PC-9 (cell line): ENCODE measurements at regions of chr2 and their contacts with region 1.

Region 1: DNA sequence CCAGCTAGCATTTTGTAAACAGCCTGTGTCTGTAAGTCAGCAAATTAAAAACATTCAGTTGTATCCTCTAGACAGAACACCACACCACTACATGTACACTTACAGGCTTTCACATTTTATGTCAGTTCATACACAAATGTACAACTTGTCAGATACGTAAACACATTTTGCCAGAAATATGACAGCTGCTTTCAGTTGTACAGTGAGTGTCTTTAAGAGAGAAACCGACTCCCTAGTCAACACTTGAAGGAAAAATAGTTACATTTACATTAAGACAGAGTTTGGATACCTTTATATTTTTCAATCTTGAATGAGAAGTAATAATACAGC is 15.2 kb downstream of the MRPL35 start:
- DNase-seq: no peak
- H3K4me3 ChIP-seq: no peak overlapping the region
- H3K27ac ChIP-seq: no peak overlapping the region
- H3K4me1 ChIP-seq: no peaks in the 10 kb centered on the region
- H3K27me3 ChIP-seq: no peaks in the 10 kb centered on the region
- CTCF ChIP-seq: no peak

Region 2: GRCh38 chr2:86383844-86384243 is 169.4 kb after region 1 on chr2:
- CTCF ChIA-PET with region 1: interaction called, 10 read pairs
- POLR2A ChIA-PET with region 1: no interaction called
- intact Hi-C with region 1: no loop called
- DNase-seq: no peak
- H3K4me3 ChIP-seq: no peak overlapping the region
- H3K27ac ChIP-seq: no peak overlapping the region
- H3K4me1 ChIP-seq: no peaks in the 10 kb centered on the region
- H3K27me3 ChIP-seq: no peaks in the 10 kb centered on the region
- CTCF ChIP-seq: no peak